A673 (cell line): ENCODE measurements at regions of chr3 and their contacts with region 1.

Region 1: DNA sequence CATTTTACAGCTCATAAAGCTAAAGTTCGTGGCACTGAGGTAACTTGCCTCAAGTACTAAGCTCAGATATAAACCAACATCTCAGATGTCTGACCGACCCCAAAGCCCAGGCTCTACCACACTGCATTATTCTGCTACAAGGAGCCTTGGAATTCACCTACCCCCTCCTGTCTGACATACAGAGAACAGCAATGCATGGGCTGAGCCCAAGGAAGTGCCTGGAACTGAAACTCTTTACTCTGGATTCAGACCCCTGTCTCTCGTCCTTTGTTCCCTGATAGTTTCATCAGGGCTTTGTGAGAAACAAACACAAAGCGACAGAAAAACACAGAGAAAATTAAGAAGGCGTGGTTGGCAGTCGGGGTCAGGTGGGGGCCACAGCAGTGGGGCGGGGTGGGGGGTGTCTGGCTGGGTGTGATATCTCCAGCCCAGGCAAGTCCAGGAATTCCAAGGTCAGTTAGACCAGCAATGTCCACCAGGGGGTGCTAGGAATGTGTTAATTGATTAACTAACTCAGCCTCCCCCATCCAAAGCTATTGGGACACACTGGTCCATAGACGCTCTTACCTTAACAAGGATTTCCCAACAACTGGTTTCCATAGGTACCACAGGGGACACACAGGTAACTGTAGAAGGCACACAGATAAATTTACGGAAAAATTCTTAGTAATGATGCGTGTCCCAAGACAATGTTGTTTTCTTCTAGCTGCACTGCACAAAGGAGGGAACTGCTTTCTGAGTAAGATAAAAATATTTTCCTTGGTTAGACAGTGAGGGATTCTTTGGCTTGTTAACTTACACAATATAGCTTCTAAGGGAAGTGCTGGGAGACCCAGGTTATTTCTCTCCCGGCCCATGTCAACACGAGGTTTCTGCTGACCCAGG is 18.8 kb upstream of the SSUH2 start:
- DNase-seq: peak; percentile 72
- H3K4me3 ChIP-seq: no peak overlapping the region
- H3K27ac ChIP-seq: no peak overlapping the region
- H3K4me1 ChIP-seq: no peaks in the 10 kb centered on the region
- H3K27me3 ChIP-seq: no peaks in the 10 kb centered on the region
- CTCF ChIP-seq: peak; percentile 63

Region 2: DNA sequence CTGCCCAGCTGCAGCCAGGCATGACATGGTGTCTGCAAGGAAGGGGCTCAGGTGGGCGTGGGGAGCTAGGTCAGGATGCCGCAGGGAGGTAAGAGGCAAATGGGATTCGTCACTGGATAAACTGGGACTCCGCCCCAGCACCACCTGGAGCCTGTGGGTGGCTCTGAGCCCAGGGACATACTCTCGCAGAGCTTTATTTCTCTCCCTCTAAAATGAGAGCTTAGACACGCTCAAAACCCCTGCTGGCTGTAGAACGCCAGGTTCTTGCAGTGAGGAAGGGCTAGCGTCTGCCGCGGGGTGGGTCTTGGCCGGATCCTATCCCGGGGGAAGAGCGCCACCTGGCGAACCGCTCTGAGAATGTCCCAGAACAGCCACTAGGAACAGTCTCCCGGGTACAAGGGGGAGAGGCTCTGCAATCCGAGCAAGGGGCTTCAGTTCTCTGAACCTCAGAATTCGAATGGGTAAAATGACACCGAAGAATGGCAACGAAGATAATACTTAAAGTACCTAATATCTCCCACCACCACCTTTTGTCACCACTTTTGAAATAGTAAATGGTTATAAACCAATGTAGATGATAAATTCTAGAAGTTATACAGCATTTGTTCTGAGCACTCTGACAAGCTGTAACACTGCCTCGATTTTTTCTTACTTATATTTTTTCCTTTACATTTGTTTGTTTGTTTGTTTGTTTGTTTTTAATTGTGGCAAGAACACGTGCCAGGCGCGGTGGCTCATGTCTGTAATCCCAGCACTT is 639.2 kb after region 1 on chr3:
- CTCF ChIA-PET with region 1: no interaction called
- POLR2A ChIA-PET with region 1: no interaction called
- intact Hi-C with region 1: loop called (anchors 5 kb)
- DNase-seq: peak; percentile 87
- H3K4me3 ChIP-seq: no peak overlapping the region
- H3K27ac ChIP-seq: no peak overlapping the region
- H3K4me1 ChIP-seq: no peaks in the 10 kb centered on the region
- H3K27me3 ChIP-seq: no peaks in the 10 kb centered on the region
- CTCF ChIP-seq: peak; percentile 90